Motor neuron (in vitro differentiated cells): ENCODE measurements at regions of chr4 and their contacts with region 1.

Region 1: GRCh38 chr4:181528570-181529184 is 714.5 kb upstream of the TENM3 start:
- ATAC-seq: peak; percentile 40 to 98 (median 62)
- H3K4me3 ChIP-seq: no peak overlapping the region
- H3K27ac ChIP-seq: no peak overlapping the region
- H3K4me1 ChIP-seq: peaks cover 0 to 14% of the 10 kb centered on the region in 2 donors

Region 2: GRCh38 chr4:180828440-180829018 is 700.1 kb before region 1 on chr4:
- in situ Hi-C with region 1: loop called in 2 of 9 experiments (anchors 25 kb)
- ATAC-seq: peak; percentile 42 to 95 (median 82)
- H3K4me3 ChIP-seq: no peak overlapping the region
- H3K27ac ChIP-seq: no peak overlapping the region
- H3K4me1 ChIP-seq: peaks cover 16 to 21% of the 10 kb centered on the region in 2 donors

Region 3: DNA sequence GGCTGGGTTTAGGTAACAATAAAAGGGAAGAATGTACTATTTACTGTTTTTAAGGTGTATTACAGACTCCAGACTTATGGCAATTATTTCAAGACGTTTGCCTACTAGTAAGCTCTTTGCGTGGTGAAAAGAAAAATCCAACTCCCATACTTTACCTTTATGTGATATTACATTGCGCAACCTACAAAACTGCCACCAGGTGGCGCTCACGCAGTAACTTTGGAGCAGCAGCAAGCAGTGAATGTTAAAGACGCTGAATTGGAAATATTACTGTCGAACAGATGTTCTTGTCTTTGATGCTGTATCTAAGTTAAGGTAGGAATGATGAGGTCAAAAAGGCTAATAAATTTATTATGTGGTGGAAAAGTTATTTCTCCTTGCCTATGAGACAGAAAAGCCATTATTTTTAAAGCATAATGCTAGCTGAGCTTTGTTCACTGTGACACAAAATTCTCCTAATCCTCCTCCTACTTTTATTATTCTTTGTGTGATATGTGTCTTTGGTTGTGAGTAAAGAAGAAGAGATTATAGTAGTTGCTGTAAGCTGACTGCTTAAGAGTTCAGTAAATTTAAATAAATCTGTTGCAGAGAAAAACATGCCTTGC is 385.3 kb before region 1 on chr4:
- in situ Hi-C with region 1: loop called in 4 of 9 experiments (anchors 10 to 25 kb)
- ATAC-seq: peak; percentile 68 to 97 (median 73)
- H3K4me3 ChIP-seq: no peak overlapping the region
- H3K27ac ChIP-seq: no peak overlapping the region
- H3K4me1 ChIP-seq: peaks cover 3 to 10% of the 10 kb centered on the region in 2 donors

Region 4: GRCh38 chr4:181261279-181261678 is 267.4 kb before region 1 on chr4:
- in situ Hi-C with region 1: loop called in 1 of 9 experiments (anchors 25 kb)
- ATAC-seq: peak in 7 of 8 experiments; percentile 43 to 95 (median 67)
- H3K4me3 ChIP-seq: no peak overlapping the region
- H3K27ac ChIP-seq: no peak overlapping the region
- H3K4me1 ChIP-seq: peaks cover 4 to 5% of the 10 kb centered on the region in 2 donors

Region 5: GRCh38 chr4:181301735-181302710 is 226.7 kb before region 1 on chr4:
- in situ Hi-C with region 1: loop called in 1 of 9 experiments (anchors 25 kb)
- ATAC-seq: peak in 6 of 8 experiments; percentile 38 to 85 (median 64)
- H3K4me3 ChIP-seq: no peak overlapping the region
- H3K27ac ChIP-seq: no peak overlapping the region
- H3K4me1 ChIP-seq: peaks cover 0 to 3% of the 10 kb centered on the region in 2 donors

Region 6: DNA sequence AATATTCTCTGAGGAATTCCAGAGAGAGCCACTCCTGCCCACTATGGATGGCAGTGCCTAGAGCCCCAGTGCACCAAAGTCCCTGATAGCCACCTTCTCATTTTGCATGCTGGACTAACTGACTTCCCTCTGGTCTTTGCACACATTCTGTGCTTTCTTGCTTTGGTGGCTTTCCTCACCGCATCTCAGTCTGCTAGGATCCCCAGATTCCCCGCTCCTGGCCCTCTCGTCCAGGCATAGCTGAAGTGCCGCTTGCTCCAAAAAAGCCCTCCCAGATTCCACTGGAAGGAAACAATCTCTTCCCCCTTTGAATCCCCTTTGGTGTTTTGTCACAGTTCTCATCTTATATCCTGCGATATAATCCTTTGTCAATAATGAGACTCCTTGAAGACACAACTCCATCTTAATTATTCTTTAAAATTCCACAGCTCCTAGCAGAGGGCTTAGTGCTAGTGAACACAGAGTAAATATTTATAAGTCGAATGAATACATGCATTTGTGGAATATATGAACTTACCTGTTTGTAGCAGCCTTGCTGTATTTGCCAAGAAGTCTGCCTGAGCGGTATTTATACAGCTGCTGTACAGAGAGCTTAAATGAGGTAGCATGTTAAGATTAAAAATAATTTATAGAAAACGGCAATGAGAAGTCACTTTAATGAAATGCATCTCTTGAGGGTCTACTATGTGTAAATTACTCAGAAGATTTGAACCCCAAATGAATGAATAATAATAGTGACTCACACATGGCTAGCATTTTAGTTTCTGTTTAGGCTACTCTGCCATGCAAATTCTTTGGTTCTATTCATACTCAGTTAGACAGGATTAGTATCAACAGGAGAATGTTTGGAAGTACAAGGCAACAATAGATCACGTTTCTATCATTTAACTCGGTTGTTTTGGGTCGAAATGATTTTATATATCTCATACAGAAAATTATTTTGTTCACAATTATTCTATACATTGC is 292.6 kb after region 1 on chr4:
- in situ Hi-C with region 1: no loop called
- ATAC-seq: peak in 6 of 8 experiments; percentile 43 to 92 (median 64)
- H3K4me3 ChIP-seq: no peak overlapping the region
- H3K27ac ChIP-seq: no peak overlapping the region
- H3K4me1 ChIP-seq: peaks cover 20 to 28% of the 10 kb centered on the region in 2 donors

Region 7: DNA sequence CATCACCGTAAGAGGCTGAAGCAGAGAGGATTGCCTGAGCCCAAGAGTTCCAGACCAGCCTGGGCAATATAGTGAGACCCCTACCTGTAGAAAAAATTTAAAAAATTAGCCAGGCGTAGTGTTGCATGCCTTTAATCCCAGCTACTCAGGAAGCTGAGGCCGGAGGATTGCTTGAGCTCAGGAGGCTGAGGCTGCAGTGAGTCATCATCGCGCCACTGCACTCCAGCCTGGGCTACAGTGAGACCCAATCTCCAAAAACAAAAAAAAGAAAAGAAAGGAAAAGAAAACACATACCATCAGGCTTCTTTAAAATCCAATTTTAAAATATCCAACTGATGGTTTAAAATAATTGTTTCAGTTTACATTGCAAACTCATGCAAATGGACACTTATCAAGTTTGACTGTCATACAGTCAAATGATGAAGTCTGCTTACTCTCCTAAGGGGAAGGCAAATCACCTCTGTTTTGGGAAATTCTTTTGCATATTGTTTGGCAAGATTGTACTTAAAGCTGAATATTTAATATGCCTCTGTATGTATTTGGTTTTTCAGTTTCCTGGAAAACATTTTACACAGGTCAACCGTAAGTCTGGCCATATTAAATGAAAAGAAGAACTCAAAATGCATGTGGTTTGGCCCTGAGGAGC is 690.9 kb after region 1 on chr4:
- in situ Hi-C with region 1: no loop called
- ATAC-seq: peak in 4 of 8 experiments; percentile 25 to 82 (median 58)
- H3K4me3 ChIP-seq: no peak overlapping the region
- H3K27ac ChIP-seq: no peak overlapping the region
- H3K4me1 ChIP-seq: peaks cover 8 to 14% of the 10 kb centered on the region in 2 donors

Region 8: DNA sequence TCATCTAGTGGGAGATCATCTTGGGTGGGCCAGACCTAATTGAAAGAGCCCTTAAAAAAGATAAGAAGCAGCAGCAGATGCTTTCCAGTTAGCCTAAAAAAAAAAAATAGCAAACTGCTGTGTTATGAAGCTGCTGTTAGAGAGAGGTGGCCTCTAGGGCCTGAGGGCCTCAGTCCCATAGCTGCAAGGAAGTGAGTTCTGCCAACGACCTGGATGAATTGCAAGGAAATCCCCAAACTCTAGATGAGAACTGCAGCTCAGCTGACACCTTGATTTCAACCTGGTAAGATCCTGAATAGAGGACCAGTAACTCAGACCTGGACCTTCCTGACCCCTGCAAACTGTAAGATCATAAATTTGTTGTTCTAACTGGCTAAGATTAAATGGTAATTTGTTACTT is 989.7 kb after region 1 on chr4:
- in situ Hi-C with region 1: no loop called
- ATAC-seq: no peak
- H3K4me3 ChIP-seq: no peak overlapping the region
- H3K27ac ChIP-seq: no peak overlapping the region
- H3K4me1 ChIP-seq: peaks cover 6 to 10% of the 10 kb centered on the region in 2 donors